CD8-positive, alpha-beta T cell (primary cell): ENCODE measurements at regions of chr1 and their contacts with region 1.

Region 1: GRCh38 chr1:23800400-23801337 is at the start of gene GALE:
- DNase-seq: peak; percentile 95 to 98 (median 97)
- ATAC-seq: peak; percentile 93
- H3K4me3 ChIP-seq: peak within 1 kb of the TSS; percentile 57 to 66
- H3K4me3 Mint-ChIP-seq: peak within 1 kb of the TSS; percentile 93
- H3K27ac ChIP-seq: peak within 1 kb of the TSS; percentile 78 to 82
- H3K27ac Mint-ChIP-seq: peak within 1 kb of the TSS; percentile 91
- H3K4me1 ChIP-seq: peaks cover 18% of the 10 kb centered on the region
- H3K4me1 Mint-ChIP-seq: peaks cover 12% of the 10 kb centered on the region
- H3K27me3 ChIP-seq: no peaks in the 10 kb centered on the region
- H3K27me3 Mint-ChIP-seq: no peaks in the 10 kb centered on the region
- CTCF ChIP-seq: no peak
- total RNA-seq, gene GALE: 4.6 to 4.7 TPM

Region 2: GRCh38 chr1:23743287-23744052 is 57.2 kb before region 1 on chr1 and contains the start of gene ELOA:
- CTCF ChIA-PET with region 1: no interaction called
- POLR2A ChIA-PET with region 1: no interaction called
- intact Hi-C with region 1: loop called (anchors 1 to 2 kb)
- DNase-seq: peak; percentile 39 to 90 (median 77)
- ATAC-seq: peak; percentile 95
- H3K4me3 ChIP-seq: peak within 1 kb of the TSS; percentile 70 to 91
- H3K4me3 Mint-ChIP-seq: peak within 1 kb of the TSS; percentile 91
- H3K27ac ChIP-seq: peak within 1 kb of the TSS; percentile 79 to 84
- H3K27ac Mint-ChIP-seq: peak within 1 kb of the TSS; percentile 93
- H3K4me1 ChIP-seq: peaks cover 34% of the 10 kb centered on the region
- H3K4me1 Mint-ChIP-seq: peaks cover 48% of the 10 kb centered on the region
- H3K27me3 ChIP-seq: no peaks in the 10 kb centered on the region
- H3K27me3 Mint-ChIP-seq: no peaks in the 10 kb centered on the region
- CTCF ChIP-seq: no peak
- total RNA-seq, gene ELOA: 41.5 to 43.3 TPM

Region 3: GRCh38 chr1:23825076-23825761 is 24.6 kb after region 1 on chr1 and contains the start of gene HMGCL:
- CTCF ChIA-PET with region 1: no interaction called
- POLR2A ChIA-PET with region 1: interaction called, 24 read pairs
- intact Hi-C with region 1: loop called (anchors 1 kb)
- DNase-seq: peak; percentile 70 to 95 (median 89)
- ATAC-seq: peak; percentile 98
- H3K4me3 ChIP-seq: peak within 1 kb of the TSS; percentile 96 to 97
- H3K4me3 Mint-ChIP-seq: peak within 1 kb of the TSS; percentile 93
- H3K27ac ChIP-seq: peak within 1 kb of the TSS; percentile 91 to 94
- H3K27ac Mint-ChIP-seq: peak within 1 kb of the TSS; percentile 96
- H3K4me1 ChIP-seq: peaks cover 10% of the 10 kb centered on the region
- H3K4me1 Mint-ChIP-seq: peaks cover 28% of the 10 kb centered on the region
- H3K27me3 ChIP-seq: no peaks in the 10 kb centered on the region
- H3K27me3 Mint-ChIP-seq: no peaks in the 10 kb centered on the region
- CTCF ChIP-seq: no peak
- total RNA-seq, gene HMGCL: 9.2 to 10.2 TPM

Region 4: GRCh38 chr1:23916209-23917131 is 115.8 kb after region 1 on chr1:
- CTCF ChIA-PET with region 1: interaction called, 14 read pairs
- POLR2A ChIA-PET with region 1: no interaction called
- intact Hi-C with region 1: no loop called
- DNase-seq: peak; percentile 36 to 86 (median 63)
- ATAC-seq: peak; percentile 98
- H3K4me3 ChIP-seq: no peak overlapping the region
- H3K4me3 Mint-ChIP-seq: no peak overlapping the region
- H3K27ac ChIP-seq: no peak overlapping the region
- H3K27ac Mint-ChIP-seq: no peak overlapping the region
- H3K4me1 ChIP-seq: peaks cover 35% of the 10 kb centered on the region
- H3K4me1 Mint-ChIP-seq: peaks cover 36% of the 10 kb centered on the region
- H3K27me3 ChIP-seq: no peaks in the 10 kb centered on the region
- H3K27me3 Mint-ChIP-seq: no peaks in the 10 kb centered on the region
- CTCF ChIP-seq: peak; percentile 86